Ovary (tissue), 10 donors: ENCODE measurements at regions of chr15 and their contacts with region 1.

Region 1: GRCh38 chr15:96416934-96417759 is 86.6 kb downstream of the NR2F2 start:
- DNase-seq: peak in 2 of 5 donors; percentile 35 to 46
- H3K4me3 ChIP-seq: peak overlapping the region; percentile 30
- H3K27ac ChIP-seq: no peak overlapping the region
- H3K4me1 ChIP-seq: peaks cover 4% of the 10 kb centered on the region
- H3K27me3 ChIP-seq: no peaks in the 10 kb centered on the region
- CTCF ChIP-seq: no peak
- EP300 ChIP-seq: no peak
- POLR2A ChIP-seq: no peak

Region 2: DNA sequence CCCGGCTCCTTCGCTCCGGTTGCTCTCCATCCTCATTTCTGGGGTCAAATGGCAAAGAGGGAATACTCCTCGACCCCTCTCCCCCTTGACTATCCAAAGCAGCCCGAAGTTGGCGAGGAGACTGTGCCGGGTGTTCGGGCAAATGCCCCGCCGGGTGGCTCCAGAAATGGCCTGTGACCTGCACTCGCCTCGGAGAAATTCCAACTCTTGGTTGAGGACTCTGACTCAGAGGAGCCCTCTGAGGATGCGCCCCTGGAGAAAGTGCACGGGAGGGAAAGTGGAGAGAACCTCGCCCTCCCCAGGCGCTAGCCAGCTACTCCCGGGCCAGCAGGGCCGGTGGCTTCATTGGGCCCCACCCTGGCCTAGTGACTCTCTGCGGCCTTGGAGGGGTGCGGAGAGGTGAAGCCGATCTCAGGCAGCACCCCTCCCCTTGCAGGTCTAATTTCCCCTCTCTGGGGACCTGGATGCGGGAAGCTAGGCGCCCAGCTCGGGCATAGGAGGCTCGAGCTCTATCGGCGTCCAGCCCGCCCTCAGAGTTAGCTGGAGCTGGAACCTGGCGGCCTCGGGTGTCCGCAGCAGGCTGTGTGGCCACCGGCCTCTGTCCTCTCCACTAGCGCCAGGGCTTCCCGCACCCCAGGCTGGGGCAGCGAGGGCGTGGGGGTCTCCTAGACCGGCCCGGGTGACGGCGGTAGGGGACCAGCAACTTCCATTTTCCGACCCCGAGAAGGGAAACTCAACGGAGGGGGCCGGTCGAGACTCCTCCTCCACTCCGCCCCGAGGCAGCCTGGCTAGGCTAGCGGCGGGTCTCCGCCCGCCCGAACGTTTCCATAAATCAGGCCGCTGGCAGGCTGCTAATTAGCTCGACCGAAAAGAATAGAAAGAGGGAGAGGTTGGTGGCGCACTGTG is 57.3 kb before region 1 on chr15:
- intact Hi-C with region 1: loop called in 2 of 4 experiments (anchors 5 to 10 kb)
- DNase-seq: peak; percentile 61 to 75 (median 72)
- H3K4me3 ChIP-seq: peak overlapping the region; percentile 56
- H3K27ac ChIP-seq: peak overlapping the region; percentile 54 to 86
- H3K4me1 ChIP-seq: peaks cover 20% of the 10 kb centered on the region
- H3K27me3 ChIP-seq: no peaks in the 10 kb centered on the region
- CTCF ChIP-seq: peak in 1 of 3 donors; percentile 18
- EP300 ChIP-seq: no peak
- POLR2A ChIP-seq: peak; percentile 34